Psoas muscle (tissue), 8 donors: ENCODE measurements at regions of chr10 and their contacts with region 1.

Region 1: GRCh38 chr10:14543046-14543903 is 212.6 kb upstream of the FRMD4A start:
- DNase-seq: no peak
- ATAC-seq: no peak
- H3K4me3 ChIP-seq: no peak overlapping the region
- H3K27ac ChIP-seq: no peak overlapping the region
- H3K4me1 ChIP-seq: no peaks in the 10 kb centered on the region
- H3K27me3 ChIP-seq: no peaks in the 10 kb centered on the region
- CTCF ChIP-seq: peak; percentile 16

Region 2: DNA sequence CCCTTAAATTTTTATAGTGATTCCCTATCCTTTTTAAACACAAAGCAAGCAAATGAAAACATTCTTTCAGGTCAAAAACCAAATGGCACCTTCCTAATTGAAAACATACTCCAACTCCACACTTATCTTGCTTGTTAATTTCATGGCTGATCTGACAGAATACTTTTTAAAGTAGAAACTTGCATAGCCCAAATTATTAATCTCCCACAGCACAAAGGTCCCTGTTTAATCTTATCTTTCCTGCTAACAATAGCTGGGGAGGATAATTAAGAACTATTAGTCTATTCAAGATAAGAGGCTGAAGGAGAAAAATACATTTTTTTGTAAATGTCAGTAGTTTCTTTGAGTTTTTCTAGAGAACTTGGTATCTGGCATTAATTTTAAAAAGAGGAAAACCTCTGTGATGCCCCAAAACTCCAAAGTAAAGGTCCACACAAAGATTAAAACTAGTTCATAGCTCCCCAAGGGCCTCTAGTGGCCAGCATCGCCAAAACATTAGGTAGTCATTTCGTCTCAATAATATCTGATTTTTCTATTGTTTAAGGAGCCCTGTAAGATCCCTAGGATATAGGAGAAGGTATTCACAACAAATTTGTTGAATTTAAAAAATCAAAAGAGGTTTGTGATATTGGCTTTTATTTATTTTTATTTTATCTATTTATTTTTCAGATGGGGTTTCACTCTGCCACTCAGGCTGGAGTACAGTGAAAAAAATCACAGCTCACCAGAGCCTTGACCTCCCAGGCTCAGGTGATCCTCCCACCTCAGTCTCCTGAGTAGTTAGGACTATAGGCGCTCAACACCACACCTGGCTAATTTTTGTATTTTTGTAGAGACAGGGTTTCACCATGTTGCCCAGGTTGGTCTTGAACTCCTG is 279.8 kb after region 1 on chr10:
- intact Hi-C with region 1: loop called in 1 of 2 experiments (anchors 5 kb)
- DNase-seq: no peak
- ATAC-seq: no peak
- H3K4me3 ChIP-seq: no peak overlapping the region
- H3K27ac ChIP-seq: no peak overlapping the region
- H3K4me1 ChIP-seq: no peaks in the 10 kb centered on the region
- H3K27me3 ChIP-seq: no peaks in the 10 kb centered on the region
- CTCF ChIP-seq: peak; percentile 31